ENCODE measurements at regions of chr7 and their contacts with region 1.

Region 1: DNA sequence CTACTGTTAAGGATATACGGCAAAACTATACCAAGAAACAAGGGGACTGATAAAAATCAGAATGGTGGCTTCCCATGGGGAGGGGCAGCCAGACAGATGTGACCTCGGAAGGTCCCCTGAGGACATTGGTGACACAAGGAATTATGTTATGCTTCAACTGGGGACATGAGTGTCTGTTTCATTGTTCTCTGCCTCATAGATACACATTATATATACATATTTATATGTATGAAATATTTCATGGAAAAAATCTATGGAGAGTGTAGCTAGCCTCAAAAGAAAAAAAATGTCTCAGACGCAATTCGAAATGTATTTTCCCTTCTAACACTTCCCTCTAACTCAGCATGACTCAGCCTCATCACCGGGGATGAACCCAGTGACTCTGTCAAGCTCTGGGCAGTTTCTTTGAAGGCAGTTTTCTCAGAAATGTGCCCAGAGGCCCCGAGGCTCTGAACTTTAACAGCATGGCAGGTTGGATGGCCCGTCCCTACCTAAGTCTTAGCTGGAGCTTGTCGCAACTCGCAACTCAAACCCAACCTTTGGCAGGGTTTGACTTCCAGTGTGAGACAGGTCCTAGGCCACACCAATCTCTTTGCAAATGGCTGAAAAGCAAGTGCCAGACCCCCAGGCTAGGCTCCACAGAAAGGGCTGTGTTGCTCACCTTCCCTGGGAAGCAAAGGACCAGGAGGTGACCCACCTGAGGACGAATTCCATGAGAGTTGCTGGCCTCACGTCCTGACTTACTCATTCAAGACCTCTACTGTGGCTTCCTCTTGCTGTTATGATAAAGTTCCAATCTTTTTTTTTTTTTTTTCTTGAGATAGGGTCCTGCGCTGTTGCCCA is 86.9 kb downstream of the CARD11 start:
- DNase-seq: peak; percentile 83
- H3K4me3 Mint-ChIP-seq: no peak overlapping the region
- H3K27ac Mint-ChIP-seq: peak overlapping the region; percentile 89
- H3K4me1 Mint-ChIP-seq: peaks cover 78% of the 10 kb centered on the region
- H3K27me3 Mint-ChIP-seq: no peaks in the 10 kb centered on the region

Region 2: DNA sequence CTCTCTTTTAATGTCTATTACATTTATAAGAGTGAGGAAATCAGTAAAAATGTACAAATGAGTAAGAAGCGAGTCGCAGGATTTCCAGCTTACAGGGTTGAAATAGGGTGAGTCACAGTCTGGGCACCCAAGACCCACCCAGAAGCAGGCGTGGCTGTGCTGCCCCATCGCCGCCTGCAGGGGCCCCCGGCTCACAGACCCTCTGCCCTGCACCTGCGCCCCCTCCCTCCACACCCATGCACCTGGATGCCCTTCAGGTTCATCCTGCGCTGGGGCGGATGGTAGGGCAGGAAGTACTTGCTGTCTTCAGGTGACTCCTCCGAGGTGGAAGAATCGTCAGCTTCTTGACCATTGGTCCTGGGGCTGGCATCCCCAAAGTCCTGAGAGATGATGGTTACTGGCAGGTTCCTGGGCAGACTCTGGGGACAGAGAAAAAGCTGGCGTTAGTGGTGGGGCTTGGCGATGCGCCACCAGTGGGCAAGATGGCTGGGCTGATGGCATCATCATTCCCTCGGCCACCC is 22.5 kb before region 1 on chr7:
- CTCF ChIA-PET with region 1: interaction called, 3 read pairs
- intact Hi-C with region 1: loop called (anchors 2 kb)
- DNase-seq: peak; percentile 72
- H3K4me3 Mint-ChIP-seq: no peak overlapping the region
- H3K27ac Mint-ChIP-seq: peak overlapping the region; percentile 99
- H3K4me1 Mint-ChIP-seq: peaks cover 19% of the 10 kb centered on the region
- H3K27me3 Mint-ChIP-seq: no peaks in the 10 kb centered on the region

Region 3: GRCh38 chr7:3028071-3028757 is 71.5 kb after region 1 on chr7:
- CTCF ChIA-PET with region 1: no interaction called
- intact Hi-C with region 1: loop called (anchors 2 kb)
- DNase-seq: peak; percentile 88
- H3K4me3 Mint-ChIP-seq: peak overlapping the region; percentile 65
- H3K27ac Mint-ChIP-seq: peak overlapping the region; percentile 92
- H3K4me1 Mint-ChIP-seq: peaks cover 57% of the 10 kb centered on the region
- H3K27me3 Mint-ChIP-seq: no peaks in the 10 kb centered on the region

Region 4: DNA sequence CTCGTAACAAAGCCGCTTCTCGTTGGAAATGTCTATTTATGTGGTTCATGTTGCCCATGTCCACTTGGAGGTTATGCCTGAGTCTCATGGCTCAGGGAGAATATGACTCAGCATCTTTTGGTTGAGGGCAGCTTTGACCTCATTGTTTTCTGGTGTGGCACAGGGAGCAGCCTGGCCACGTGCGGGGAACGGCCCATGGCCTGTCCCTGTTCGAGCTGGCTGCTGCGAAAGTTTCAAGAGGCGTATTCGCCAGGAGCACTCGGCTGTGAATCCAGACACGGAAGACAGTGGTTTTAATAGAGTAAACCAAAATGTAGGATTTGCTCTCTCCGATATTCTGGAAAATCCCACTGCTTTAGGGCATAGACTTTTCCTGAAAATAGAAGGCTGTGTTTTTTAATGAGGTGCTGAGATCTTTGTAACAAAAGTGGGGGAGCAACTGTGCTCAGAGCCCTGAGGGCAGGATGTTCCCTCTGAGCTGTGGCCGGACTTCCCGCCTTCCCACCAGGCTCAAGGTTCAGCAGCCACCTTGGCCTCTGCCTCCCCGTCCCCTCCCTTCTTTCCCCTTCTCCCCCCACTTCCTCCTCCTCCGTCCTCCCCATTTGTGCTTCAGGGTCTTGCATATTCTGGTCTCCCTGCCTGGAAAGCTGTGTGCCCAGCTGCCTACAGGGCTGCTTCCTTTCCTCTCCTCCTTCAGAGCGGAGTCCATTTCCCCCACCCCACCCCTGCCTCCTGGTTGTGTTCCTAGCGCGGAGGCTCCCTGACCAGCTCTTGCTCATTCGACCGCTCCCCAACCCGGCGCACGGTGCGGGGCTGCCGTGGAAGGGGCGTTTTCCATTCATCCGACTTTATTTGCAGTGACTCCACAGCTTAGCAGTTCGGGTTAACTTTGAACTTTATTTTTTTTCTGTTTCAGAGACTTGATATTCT is 986.3 kb after region 1 on chr7:
- CTCF ChIA-PET with region 1: no interaction called
- intact Hi-C with region 1: no loop called
- DNase-seq: no peak
- H3K4me3 Mint-ChIP-seq: no peak overlapping the region
- H3K27ac Mint-ChIP-seq: no peak overlapping the region
- H3K4me1 Mint-ChIP-seq: no peaks in the 10 kb centered on the region
- H3K27me3 Mint-ChIP-seq: peaks cover 3% of the 10 kb centered on the region

Measured in activated naive CD4-positive, alpha-beta T cell treated with anti-CD3 and anti-CD28 coated beads for 36 hours (primary cell).